ENCODE measurements at regions of chr12 and their contacts with region 1.

Region 1: GRCh38 chr12:122471324-122472226 is 29.2 kb downstream of the ZCCHC8 start:
- DNase-seq: peak; percentile 29 to 83
- ATAC-seq: peak; percentile 75 to 77; a peak in 5 of 6 replicates
- H3K4me3 ChIP-seq: no peak overlapping the region; the same call in 2 of the 3 replicates
- H3K27ac ChIP-seq: peak overlapping the region; percentile 52 to 74
- H3K4me1 ChIP-seq: peaks cover 6% of the 10 kb centered on the region
- CTCF ChIP-seq: peak; percentile 84
- EP300 ChIP-seq: no peak
- POLR2A ChIP-seq: no peak
- RAD21 ChIP-seq: peak; percentile 83 to 87

Region 2: DNA sequence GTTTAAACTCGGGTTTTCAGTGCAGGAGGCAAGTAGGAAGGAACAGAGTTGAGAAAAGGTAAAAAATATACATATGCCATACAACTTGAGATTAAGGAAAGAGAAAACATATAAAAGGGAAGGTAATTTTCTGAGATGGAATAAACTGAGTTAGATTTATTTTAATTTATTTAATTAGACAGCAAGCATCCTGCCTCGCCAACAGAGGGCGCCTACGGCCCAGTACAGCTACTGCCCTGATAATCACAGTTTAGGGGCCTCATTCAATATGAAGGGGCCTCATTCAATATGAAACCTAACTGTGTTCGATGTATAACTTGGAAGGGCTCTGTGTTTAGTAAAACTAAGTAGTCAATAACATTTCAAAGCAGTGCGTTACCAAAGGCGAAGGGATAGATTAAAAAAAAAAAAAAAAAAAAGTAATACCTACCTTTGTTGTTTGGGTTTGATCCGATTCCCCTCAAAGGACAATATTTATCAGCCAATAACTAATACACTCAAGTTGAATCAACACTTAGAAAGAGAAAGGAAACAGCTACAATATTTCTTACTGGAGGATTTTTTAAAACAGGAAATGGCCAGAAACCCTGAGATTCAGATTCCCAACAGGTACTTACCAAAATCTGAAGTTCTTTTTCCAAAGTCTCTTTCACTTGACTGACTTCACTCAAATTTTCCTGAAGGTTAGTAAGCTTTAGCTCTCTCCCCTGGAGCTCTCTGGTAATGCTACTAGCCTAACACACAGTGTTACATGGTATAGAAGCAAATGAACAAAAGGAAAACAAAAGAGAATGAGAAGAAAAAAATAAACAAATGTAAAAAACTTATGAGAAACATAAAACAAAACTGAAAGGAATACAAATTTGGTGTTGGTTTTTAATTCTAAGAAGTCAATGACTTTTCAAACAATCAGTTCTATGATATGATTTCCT is 135.3 kb before region 1 on chr12:
- CTCF ChIA-PET with region 1: interaction called, 36 read pairs
- POLR2A ChIA-PET with region 1: no interaction called
- DNase-seq: peak; percentile 38 to 51
- ATAC-seq: peak in 1 of 2 experiments; percentile 80; a peak in 3 of 6 replicates
- H3K4me3 ChIP-seq: no peak overlapping the region
- H3K27ac ChIP-seq: no peak overlapping the region
- H3K4me1 ChIP-seq: no peaks in the 10 kb centered on the region; the same call in 2 of the 3 replicates
- CTCF ChIP-seq: peak; percentile 86
- EP300 ChIP-seq: no peak
- POLR2A ChIP-seq: no peak
- RAD21 ChIP-seq: peak; percentile 70 to 82

Region 3: DNA sequence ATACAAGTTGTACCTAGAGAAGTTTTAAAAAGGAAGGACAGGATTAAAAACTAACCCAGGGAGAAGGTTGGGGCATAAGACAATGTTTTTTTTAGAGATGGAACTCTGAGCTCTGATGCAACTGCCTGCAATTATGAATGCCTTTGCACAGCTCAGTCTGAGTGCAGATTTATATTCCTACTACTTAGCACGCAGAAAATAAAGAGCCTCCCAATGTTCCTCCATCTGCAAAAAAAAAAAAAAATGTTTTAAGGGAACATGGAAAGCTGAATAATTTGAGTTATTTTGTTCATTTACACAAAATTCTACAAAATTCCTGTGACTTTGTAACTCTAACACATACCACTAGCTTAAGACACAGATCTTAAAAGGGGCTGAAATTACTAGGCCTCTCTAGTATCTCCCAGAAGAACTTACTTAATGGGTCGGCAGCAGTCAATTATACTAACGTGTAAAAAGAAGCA is 64.8 kb before region 1 on chr12:
- CTCF ChIA-PET with region 1: interaction called, 162 read pairs
- POLR2A ChIA-PET with region 1: interaction called, 3 read pairs
- DNase-seq: peak in 1 of 2 experiments; percentile 74
- ATAC-seq: peak; percentile 63 to 92
- H3K4me3 ChIP-seq: no peak overlapping the region
- H3K27ac ChIP-seq: peak overlapping the region; percentile 92 to 98
- H3K4me1 ChIP-seq: peaks cover 53% of the 10 kb centered on the region
- CTCF ChIP-seq: no peak
- EP300 ChIP-seq: peak in 1 of 2 experiments; percentile 21; a peak in 1 of 5 replicates
- POLR2A ChIP-seq: no peak
- RAD21 ChIP-seq: no peak

Region 4: GRCh38 chr12:122413516-122414404 is 57.8 kb before region 1 on chr12:
- CTCF ChIA-PET with region 1: interaction called, 14 read pairs
- POLR2A ChIA-PET with region 1: interaction called, 5 read pairs
- DNase-seq: no peak
- ATAC-seq: peak; percentile 47 to 54; a peak in 4 of 6 replicates
- H3K4me3 ChIP-seq: no peak overlapping the region
- H3K27ac ChIP-seq: peak overlapping the region; percentile 46 to 66
- H3K4me1 ChIP-seq: peaks cover 41% of the 10 kb centered on the region
- CTCF ChIP-seq: no peak
- EP300 ChIP-seq: no peak
- POLR2A ChIP-seq: no peak
- RAD21 ChIP-seq: no peak

Region 5: DNA sequence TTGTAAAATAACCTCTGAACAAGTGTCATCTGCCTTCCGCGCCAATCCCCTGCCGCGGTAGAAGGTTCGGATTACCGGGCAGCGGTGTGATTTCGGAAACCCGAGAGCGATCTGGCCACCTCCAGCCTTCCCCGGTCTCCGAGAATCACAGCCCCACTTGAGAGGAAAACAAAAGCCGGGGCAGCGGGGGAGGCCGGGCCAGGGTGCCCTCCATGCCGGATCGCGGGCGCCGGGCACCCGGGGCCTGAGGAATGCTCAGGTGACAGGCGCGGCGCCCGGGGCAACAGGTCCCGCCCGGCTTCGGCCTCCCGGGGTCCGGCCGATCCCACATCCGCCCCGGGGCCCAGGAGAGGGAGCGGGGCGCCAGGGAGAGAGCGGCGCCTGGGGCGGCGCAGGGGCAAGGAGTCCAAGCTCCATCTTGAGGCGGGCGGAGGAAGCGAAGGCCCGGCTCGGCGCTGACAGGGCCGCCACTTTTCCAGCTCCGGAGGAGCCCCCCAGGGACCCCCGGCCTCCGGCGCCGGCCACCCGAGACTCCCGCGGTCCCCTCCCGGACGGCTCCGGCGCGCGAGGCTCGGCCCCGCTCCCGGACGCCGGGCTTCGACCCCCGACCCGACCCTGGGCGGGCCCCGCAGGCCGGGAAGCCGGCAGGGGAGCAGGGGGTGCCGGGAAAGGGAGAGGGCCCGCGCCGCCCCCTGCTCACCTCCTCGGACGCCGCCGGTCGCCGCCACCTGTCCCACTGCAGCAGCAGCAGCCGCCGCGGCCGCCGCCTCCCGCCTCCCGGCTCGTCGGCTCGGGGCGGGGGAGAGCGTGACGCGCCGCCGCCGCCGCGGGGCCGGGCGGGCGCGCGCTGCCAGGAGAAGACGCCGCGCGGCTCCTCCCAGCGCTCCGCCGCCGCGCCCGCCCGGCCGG is 49.5 kb before region 1 on chr12 and contains the start of gene CLIP1:
- CTCF ChIA-PET with region 1: interaction called, 14 read pairs
- POLR2A ChIA-PET with region 1: interaction called, 6 read pairs
- DNase-seq: peak; percentile 40 to 79
- ATAC-seq: peak; percentile 80 to 86
- H3K4me3 ChIP-seq: peak within 1 kb of the TSS; percentile 79
- H3K27ac ChIP-seq: peak within 1 kb of the TSS; percentile 100
- H3K4me1 ChIP-seq: peaks cover 48% of the 10 kb centered on the region
- CTCF ChIP-seq: peak; percentile 60
- EP300 ChIP-seq: no peak
- POLR2A ChIP-seq: peak; percentile 45; the same call in 1 of the 2 replicates
- RAD21 ChIP-seq: peak; percentile 58 to 78
- polyA plus RNA-seq, gene CLIP1: 133 and 149 TPM in 2 replicates

Region 6: DNA sequence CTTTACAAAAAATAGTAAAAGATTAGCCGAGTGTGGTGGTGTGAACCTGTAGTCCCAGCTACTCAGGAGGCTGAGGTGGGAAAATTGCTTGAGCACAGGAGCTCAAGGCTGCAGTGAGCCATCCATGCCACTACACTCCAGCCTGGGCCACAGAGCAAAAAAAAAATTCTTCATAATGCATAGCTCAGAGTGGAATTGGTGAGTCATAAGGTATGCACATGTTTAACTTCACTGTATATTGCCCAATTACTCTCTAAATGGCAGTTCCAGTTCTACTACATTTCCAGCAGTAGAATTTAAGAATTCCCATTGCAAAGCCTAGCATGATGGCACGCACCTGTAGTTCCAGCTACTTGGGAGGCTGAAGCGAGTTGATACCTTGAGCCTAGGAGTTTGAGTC is 22.2 kb before region 1 on chr12:
- CTCF ChIA-PET with region 1: interaction called, 11 read pairs
- POLR2A ChIA-PET with region 1: no interaction called
- DNase-seq: peak in 1 of 2 experiments; percentile 76
- ATAC-seq: peak; percentile 85 to 96
- H3K4me3 ChIP-seq: no peak overlapping the region
- H3K27ac ChIP-seq: peak overlapping the region in 1 of 2 experiments; percentile 59; a peak in 2 of 6 replicates
- H3K4me1 ChIP-seq: peaks cover 18% of the 10 kb centered on the region; the same call in 2 of the 3 replicates
- CTCF ChIP-seq: no peak
- EP300 ChIP-seq: no peak
- POLR2A ChIP-seq: no peak
- RAD21 ChIP-seq: no peak

Region 7: DNA sequence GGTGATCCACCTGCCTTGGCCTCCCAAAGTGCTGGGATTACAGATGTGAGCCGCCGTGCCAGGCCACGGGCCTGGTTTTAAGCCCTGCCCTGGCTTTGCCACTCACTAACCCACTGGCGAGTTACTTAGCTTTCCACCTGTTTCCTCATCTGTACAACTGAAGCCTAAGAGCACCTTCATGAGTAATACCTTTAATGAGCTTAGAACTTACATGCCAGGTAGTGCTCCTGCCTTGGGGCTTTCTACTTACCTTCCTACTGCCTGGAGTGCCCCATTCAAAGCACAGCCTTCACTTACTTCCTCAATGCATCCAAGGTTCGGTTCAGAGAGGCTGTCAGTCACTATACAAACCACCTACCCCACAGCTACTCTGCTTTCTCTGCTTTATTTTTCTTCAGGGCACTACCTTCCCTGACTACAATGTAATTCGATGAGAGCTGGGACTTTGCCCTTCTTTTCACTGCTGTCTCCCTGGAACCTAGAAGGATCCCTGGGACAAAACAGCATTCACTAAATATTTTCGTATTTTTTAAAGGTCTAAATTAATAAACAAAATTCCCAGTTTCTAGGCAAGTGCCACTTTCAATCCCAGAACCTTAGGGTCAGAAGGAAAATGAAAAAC is 15.3 kb after region 1 on chr12:
- CTCF ChIA-PET with region 1: interaction called, 15 read pairs
- POLR2A ChIA-PET with region 1: interaction called, 8 read pairs
- DNase-seq: no peak
- ATAC-seq: no peak
- H3K4me3 ChIP-seq: no peak overlapping the region
- H3K27ac ChIP-seq: no peak overlapping the region
- H3K4me1 ChIP-seq: peaks cover 11% of the 10 kb centered on the region; the same call in 1 of the 3 replicates
- CTCF ChIP-seq: no peak
- EP300 ChIP-seq: no peak
- POLR2A ChIP-seq: no peak
- RAD21 ChIP-seq: no peak

Region 8: DNA sequence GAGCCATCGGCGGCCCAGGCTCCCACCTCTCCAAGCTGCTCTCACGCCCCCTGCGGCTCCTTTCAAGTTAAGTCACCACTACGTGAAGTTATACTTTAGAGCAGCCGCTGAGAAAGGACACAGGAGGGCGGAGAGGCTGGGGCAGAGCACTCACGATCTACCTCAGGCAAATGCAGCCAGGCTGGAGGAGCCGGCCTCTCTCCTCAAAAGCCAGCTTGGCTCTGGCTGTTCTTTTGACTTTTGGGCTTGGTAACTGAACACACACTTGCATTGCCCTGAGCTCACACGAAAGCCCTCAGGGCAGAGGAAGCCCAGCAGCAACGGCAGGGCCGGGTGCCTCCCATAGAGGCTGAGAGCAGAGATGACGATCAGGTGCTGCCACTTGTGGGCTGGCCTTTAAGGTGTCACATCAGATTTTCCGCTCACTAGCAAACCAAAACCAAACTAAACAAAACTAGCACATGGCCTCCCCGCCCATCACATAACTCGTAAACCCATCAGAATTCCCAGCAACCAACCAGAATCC is 604.1 kb after region 1 on chr12:
- CTCF ChIA-PET with region 1: no interaction called
- POLR2A ChIA-PET with region 1: no interaction called
- DNase-seq: no peak
- ATAC-seq: no peak
- H3K4me3 ChIP-seq: no peak overlapping the region
- H3K27ac ChIP-seq: peak overlapping the region in 1 of 2 experiments; percentile 51; a peak in 1 of 6 replicates
- H3K4me1 ChIP-seq: peaks cover 19% of the 10 kb centered on the region; the same call in 2 of the 3 replicates
- CTCF ChIP-seq: no peak
- EP300 ChIP-seq: no peak
- POLR2A ChIP-seq: no peak
- RAD21 ChIP-seq: no peak

Region 9: GRCh38 chr12:123160801-123161487 is 689.4 kb after region 1 on chr12:
- CTCF ChIA-PET with region 1: no interaction called
- POLR2A ChIA-PET with region 1: no interaction called
- DNase-seq: no peak
- ATAC-seq: no peak
- H3K4me3 ChIP-seq: no peak overlapping the region
- H3K27ac ChIP-seq: peak overlapping the region in 1 of 2 experiments; percentile 2; a peak in 1 of 6 replicates
- H3K4me1 ChIP-seq: peaks cover 36% of the 10 kb centered on the region
- CTCF ChIP-seq: no peak
- EP300 ChIP-seq: no peak
- POLR2A ChIP-seq: no peak
- RAD21 ChIP-seq: no peak